Ovary (tissue), 10 donors: ENCODE measurements at regions of chr7 and their contacts with region 1.

Region 1: DNA sequence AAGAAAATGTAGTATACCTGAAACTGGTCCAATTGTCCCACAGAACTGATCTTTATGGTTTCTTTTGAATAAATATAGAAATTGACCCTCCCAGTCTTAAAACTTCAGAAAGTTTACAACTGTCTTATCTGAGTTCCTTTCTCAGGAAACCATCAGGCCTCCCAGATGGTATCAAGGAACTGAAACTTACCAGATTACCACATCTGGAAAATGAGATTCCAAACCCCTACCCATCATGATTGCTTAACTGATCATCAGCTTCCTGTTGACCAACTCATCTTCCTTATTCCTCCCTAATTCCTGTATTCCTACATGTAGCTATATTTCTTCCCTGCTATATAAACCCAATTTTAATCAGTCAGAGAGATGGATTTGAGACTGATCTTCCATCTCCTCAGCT is 5.5 kb downstream of the VWDE start:
- DNase-seq: no peak
- H3K4me3 ChIP-seq: no peak overlapping the region
- H3K27ac ChIP-seq: no peak overlapping the region
- H3K4me1 ChIP-seq: no peaks in the 10 kb centered on the region
- H3K27me3 ChIP-seq: no peaks in the 10 kb centered on the region
- CTCF ChIP-seq: no peak
- EP300 ChIP-seq: no peak
- POLR2A ChIP-seq: no peak

Region 2: DNA sequence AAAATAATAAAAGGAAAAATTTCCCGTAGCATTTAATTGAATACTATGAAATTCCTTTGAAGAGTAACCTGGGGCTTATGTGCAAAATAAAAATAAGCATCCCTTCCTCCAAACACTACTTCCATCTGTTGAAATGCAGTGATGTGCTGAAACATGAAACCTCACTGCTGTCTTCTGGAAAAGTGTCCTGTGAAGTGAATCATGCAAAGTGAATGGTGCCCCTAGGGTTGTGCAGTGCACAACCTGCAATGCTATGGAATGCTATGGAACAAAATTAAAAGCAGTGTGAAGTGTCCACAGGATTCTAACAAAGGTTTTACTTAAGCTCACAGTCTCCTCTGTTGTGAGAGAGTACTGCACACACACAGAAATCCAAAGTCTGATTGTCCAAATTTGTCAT is 1110.4 kb after region 1 on chr7:
- intact Hi-C with region 1: loop called in 1 of 4 experiments (anchors 5 kb)
- DNase-seq: no peak
- H3K4me3 ChIP-seq: no peak overlapping the region
- H3K27ac ChIP-seq: no peak overlapping the region
- H3K4me1 ChIP-seq: no peaks in the 10 kb centered on the region
- H3K27me3 ChIP-seq: no peaks in the 10 kb centered on the region
- CTCF ChIP-seq: no peak
- EP300 ChIP-seq: no peak
- POLR2A ChIP-seq: no peak